Adrenal gland (tissue), 19 donors: ENCODE measurements at regions of chr11 and their contacts with region 1.

Region 1: GRCh38 chr11:75532200-75533048 is 6.7 kb upstream of the GDPD5 start:
- DNase-seq: peak in 6 of 7 donors; percentile 54 to 91 (median 71)
- H3K4me3 ChIP-seq: no peak overlapping the region
- H3K27ac ChIP-seq: no peak overlapping the region
- H3K4me1 ChIP-seq: no peaks in the 10 kb centered on the region
- H3K27me3 ChIP-seq: no peaks in the 10 kb centered on the region
- CTCF ChIP-seq: peak; percentile 80 to 97 (median 92)
- POLR2A ChIP-seq: peak in 1 of 2 donors; percentile 12

Region 2: GRCh38 chr11:75280227-75280701 is 252.2 kb before region 1 on chr11:
- intact Hi-C with region 1: loop called in 1 of 2 experiments (anchors 10 kb)
- DNase-seq: peak; percentile 71 to 92 (median 78)
- H3K4me3 ChIP-seq: no peak overlapping the region
- H3K27ac ChIP-seq: peak overlapping the region in 1 of 5 donors; percentile 7
- H3K4me1 ChIP-seq: no peaks in the 10 kb centered on the region
- H3K27me3 ChIP-seq: no peaks in the 10 kb centered on the region
- CTCF ChIP-seq: peak; percentile 96 to 98 (median 97)
- POLR2A ChIP-seq: no peak

Region 3: DNA sequence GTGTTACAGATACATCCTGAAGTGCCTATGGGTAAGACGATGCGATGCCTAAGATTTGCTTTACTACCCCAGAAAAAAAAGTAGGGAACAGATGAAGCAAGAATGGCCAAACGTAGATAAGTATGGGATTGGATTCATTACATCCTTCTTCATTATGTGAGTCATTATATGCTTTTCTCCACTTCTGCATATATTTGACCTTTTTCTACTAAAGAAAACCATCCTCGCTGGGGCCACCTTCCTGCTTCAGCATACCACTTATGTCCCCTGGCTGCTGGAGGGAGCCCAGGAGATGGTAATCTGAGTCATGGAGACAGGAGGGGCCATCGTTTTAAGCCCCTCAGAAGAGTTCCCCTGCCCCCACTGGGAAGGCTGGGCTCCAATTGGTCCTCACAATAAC is 85.0 kb before region 1 on chr11:
- intact Hi-C with region 1: loop called (anchors 2 kb)
- DNase-seq: no peak
- H3K4me3 ChIP-seq: no peak overlapping the region
- H3K27ac ChIP-seq: no peak overlapping the region
- H3K4me1 ChIP-seq: no peaks in the 10 kb centered on the region
- H3K27me3 ChIP-seq: no peaks in the 10 kb centered on the region
- CTCF ChIP-seq: no peak
- POLR2A ChIP-seq: no peak

Region 4: GRCh38 chr11:76140912-76141574 is 608.6 kb after region 1 on chr11:
- intact Hi-C with region 1: no loop called
- DNase-seq: no peak
- H3K4me3 ChIP-seq: no peak overlapping the region
- H3K27ac ChIP-seq: no peak overlapping the region
- H3K4me1 ChIP-seq: no peaks in the 10 kb centered on the region
- H3K27me3 ChIP-seq: no peaks in the 10 kb centered on the region
- CTCF ChIP-seq: no peak
- POLR2A ChIP-seq: no peak